MCF 10A (cell line): ENCODE measurements at regions of chr11 and their contacts with region 1.

Region 1: GRCh38 chr11:9265211-9266131 is at the start of gene DENND5A:
- DNase-seq: peak; percentile 79
- H3K4me3 Mint-ChIP-seq: peak within 1 kb of the TSS; percentile 84
- H3K27ac Mint-ChIP-seq: peak within 1 kb of the TSS; percentile 70
- H3K4me1 Mint-ChIP-seq: peaks cover 15% of the 10 kb centered on the region
- H3K27me3 Mint-ChIP-seq: no peaks in the 10 kb centered on the region
- CTCF ChIP-seq: no peak
- total RNA-seq, gene DENND5A: 55.4 and 61.1 TPM in 2 replicates

Region 2: DNA sequence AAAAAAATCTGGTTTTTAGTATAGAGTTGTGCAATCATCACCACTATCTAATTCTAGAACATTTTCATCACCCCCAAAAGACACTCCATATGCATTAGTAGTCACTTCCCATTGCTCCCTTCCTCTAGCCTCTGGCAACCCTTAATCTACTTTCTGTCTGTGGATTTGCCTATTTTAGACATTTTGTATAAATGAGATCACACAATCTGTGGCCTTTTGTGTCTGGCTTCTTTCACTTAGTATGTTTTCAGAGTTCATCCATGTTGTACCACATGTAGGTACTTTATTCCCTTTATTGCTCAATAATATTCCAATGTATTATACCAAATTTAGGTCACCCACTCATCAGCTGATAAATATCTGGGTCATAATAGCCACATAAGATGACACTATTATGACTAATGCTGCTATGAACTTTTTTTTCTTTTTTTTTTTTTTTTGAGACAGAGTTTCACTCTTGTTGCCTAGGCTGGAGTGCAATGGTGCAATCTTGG is 106.5 kb before region 1 on chr11:
- CTCF ChIA-PET with region 1: interaction called, 3 read pairs
- POLR2A ChIA-PET with region 1: no interaction called
- intact Hi-C with region 1: loop called (anchors 5 kb)
- DNase-seq: no peak
- H3K4me3 Mint-ChIP-seq: no peak overlapping the region
- H3K27ac Mint-ChIP-seq: no peak overlapping the region
- H3K4me1 Mint-ChIP-seq: peaks cover 6% of the 10 kb centered on the region
- H3K27me3 Mint-ChIP-seq: no peaks in the 10 kb centered on the region
- CTCF ChIP-seq: no peak

Region 3: DNA sequence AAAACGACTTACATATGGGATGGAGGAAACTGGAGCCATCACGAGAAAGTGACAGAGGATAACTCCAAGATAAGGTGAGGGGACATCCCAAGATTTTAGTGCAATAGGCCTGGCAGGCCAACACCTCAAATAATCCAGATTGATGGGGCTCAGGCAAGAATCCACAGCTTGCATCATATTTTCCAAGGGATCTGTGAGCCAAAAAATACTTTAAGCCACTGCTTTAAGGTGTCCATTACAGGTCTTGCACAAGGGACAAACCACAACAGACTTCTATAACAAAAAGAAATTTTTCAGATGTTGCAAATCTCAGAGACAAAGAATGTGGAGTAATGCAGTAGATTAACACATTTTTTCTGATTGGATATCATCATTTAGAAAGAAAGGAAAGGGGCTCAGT is 45.9 kb before region 1 on chr11:
- CTCF ChIA-PET with region 1: no interaction called
- POLR2A ChIA-PET with region 1: interaction called, 3 read pairs
- intact Hi-C with region 1: loop called (anchors 2 kb)
- DNase-seq: peak; percentile 90
- H3K4me3 Mint-ChIP-seq: no peak overlapping the region
- H3K27ac Mint-ChIP-seq: peak overlapping the region; percentile 28
- H3K4me1 Mint-ChIP-seq: peaks cover 12% of the 10 kb centered on the region
- H3K27me3 Mint-ChIP-seq: no peaks in the 10 kb centered on the region
- CTCF ChIP-seq: no peak

Region 4: GRCh38 chr11:9314291-9315036 is 49.0 kb after region 1 on chr11 and contains the start of gene TMEM41B:
- CTCF ChIA-PET with region 1: interaction called, 3 read pairs
- POLR2A ChIA-PET with region 1: interaction called, 13 read pairs
- intact Hi-C with region 1: no loop called
- DNase-seq: peak; percentile 99
- H3K4me3 Mint-ChIP-seq: peak within 1 kb of the TSS; percentile 99
- H3K27ac Mint-ChIP-seq: peak within 1 kb of the TSS; percentile 98
- H3K4me1 Mint-ChIP-seq: peaks cover 14% of the 10 kb centered on the region
- H3K27me3 Mint-ChIP-seq: no peaks in the 10 kb centered on the region
- CTCF ChIP-seq: no peak
- total RNA-seq, gene TMEM41B: 50.3 and 72.8 TPM in 2 replicates

Region 5: GRCh38 chr11:9384535-9385303 is 119.2 kb after region 1 on chr11 and contains the start of gene IPO7:
- CTCF ChIA-PET with region 1: no interaction called
- POLR2A ChIA-PET with region 1: interaction called, 14 read pairs
- intact Hi-C with region 1: loop called (anchors 2 kb)
- DNase-seq: peak; percentile 92
- H3K4me3 Mint-ChIP-seq: peak within 1 kb of the TSS; percentile 90
- H3K27ac Mint-ChIP-seq: peak within 1 kb of the TSS; percentile 94
- H3K4me1 Mint-ChIP-seq: peaks cover 12% of the 10 kb centered on the region
- H3K27me3 Mint-ChIP-seq: no peaks in the 10 kb centered on the region
- CTCF ChIP-seq: peak; percentile 32
- total RNA-seq, gene IPO7: 116 and 145 TPM in 2 replicates